ENCODE measurements at regions of chr1 and their contacts with region 1.

Region 1: GRCh38 chr1:73783352-73783751 is 414.6 kb downstream of the LRRIQ3 start:
- DNase-seq: peak; percentile 57
- ATAC-seq: peak; percentile 94
- H3K4me3 ChIP-seq: peak overlapping the region; percentile 15; the same call in 1 of the 2 replicates
- H3K27ac ChIP-seq: peak overlapping the region; percentile 64
- H3K4me1 ChIP-seq: peaks cover 27% of the 10 kb centered on the region
- H3K27me3 ChIP-seq: no peaks in the 10 kb centered on the region
- CTCF ChIP-seq: no peak

Region 2: DNA sequence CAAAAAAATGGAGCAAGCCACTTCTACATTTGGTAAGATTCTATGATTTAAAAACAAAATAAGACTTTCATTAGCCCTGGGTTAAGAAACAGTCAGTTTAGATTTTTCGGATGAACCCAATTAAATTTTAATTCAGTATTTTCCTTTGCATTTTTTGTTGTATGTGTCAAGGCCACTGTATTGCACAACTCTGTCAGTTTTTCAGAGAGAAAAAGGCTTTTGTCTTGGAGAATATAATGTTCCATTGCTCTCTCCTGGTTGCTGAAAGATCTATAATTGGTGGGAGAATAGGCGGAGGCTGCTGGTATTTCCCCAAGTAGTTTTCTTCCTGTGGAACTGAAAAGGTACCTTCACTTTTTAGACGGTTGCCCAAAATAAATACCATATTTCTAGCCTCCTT is 1585.6 kb before region 1 on chr1:
- CTCF ChIA-PET with region 1: no interaction called
- POLR2A ChIA-PET with region 1: interaction called, 13 read pairs
- intact Hi-C with region 1: no loop called
- DNase-seq: no peak
- ATAC-seq: no peak
- H3K4me3 ChIP-seq: no peak overlapping the region
- H3K27ac ChIP-seq: no peak overlapping the region
- H3K4me1 ChIP-seq: no peaks in the 10 kb centered on the region
- H3K27me3 ChIP-seq: no peaks in the 10 kb centered on the region
- CTCF ChIP-seq: no peak

Region 3: DNA sequence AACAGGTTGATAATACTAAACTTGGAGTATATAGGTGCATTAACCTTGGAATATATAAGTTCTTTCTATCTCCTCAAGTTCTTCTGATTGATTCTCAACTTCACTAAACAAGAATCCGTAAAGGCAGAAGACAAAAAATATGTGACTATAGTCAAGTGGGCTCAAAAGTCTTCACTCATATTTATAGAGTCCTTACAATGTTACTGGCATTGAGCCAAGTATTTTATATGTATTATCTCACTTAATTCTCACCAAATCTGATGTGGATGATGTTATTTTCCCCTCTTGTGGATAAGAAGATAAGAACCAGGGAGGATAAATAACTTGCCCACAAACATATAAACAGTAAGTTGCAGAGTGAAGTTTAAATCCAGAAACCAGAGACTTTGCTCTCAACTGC is 72.3 kb before region 1 on chr1:
- CTCF ChIA-PET with region 1: no interaction called
- POLR2A ChIA-PET with region 1: no interaction called
- intact Hi-C with region 1: no loop called
- DNase-seq: no peak
- ATAC-seq: no peak
- H3K4me3 ChIP-seq: no peak overlapping the region
- H3K27ac ChIP-seq: no peak overlapping the region
- H3K4me1 ChIP-seq: no peaks in the 10 kb centered on the region
- H3K27me3 ChIP-seq: no peaks in the 10 kb centered on the region
- CTCF ChIP-seq: no peak

Region 4: GRCh38 chr1:73868810-73869336 is 85.5 kb after region 1 on chr1:
- CTCF ChIA-PET with region 1: no interaction called
- POLR2A ChIA-PET with region 1: no interaction called
- intact Hi-C with region 1: no loop called
- DNase-seq: no peak
- ATAC-seq: no peak
- H3K4me3 ChIP-seq: no peak overlapping the region
- H3K27ac ChIP-seq: no peak overlapping the region
- H3K4me1 ChIP-seq: no peaks in the 10 kb centered on the region
- H3K27me3 ChIP-seq: no peaks in the 10 kb centered on the region
- CTCF ChIP-seq: no peak